Caco-2 (cell line): ENCODE measurements at regions of chr3 and their contacts with region 1.

Region 1: DNA sequence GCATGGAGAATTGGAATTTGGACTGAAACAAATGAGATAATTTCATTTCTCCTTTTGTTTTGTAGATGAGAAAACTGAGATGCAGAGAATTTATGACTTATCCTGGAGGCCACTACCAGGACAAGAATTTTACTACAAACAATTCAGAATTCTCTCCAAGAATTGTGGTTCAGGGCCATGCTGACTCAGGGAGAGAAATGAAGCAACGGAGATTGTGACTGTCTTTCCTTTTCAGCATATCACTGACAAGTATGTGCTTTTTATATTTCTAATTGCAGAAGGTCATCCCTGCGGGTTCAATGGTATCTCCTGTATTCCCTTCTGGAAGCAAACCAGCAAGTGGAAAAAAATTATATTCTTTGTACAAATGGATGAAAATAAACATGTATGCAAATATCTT is 170.8 kb upstream of the MITF start:
- DNase-seq: no peak
- H3K4me3 ChIP-seq: no peak overlapping the region
- H3K4me3 Mint-ChIP-seq: no peak overlapping the region
- H3K27ac Mint-ChIP-seq: no peak overlapping the region
- H3K4me1 ChIP-seq: no peaks in the 10 kb centered on the region
- H3K4me1 Mint-ChIP-seq: no peaks in the 10 kb centered on the region
- H3K27me3 ChIP-seq: no peaks in the 10 kb centered on the region
- H3K27me3 Mint-ChIP-seq: peaks cover 16% of the 10 kb centered on the region
- CTCF ChIP-seq: no peak

Region 2: GRCh38 chr3:69420781-69421520 is 147.5 kb before region 1 on chr3:
- CTCF ChIA-PET with region 1: no interaction called
- POLR2A ChIA-PET with region 1: no interaction called
- intact Hi-C with region 1: no loop called
- DNase-seq: no peak
- H3K4me3 ChIP-seq: no peak overlapping the region
- H3K4me3 Mint-ChIP-seq: no peak overlapping the region
- H3K27ac Mint-ChIP-seq: no peak overlapping the region
- H3K4me1 ChIP-seq: peaks cover 4% of the 10 kb centered on the region
- H3K4me1 Mint-ChIP-seq: peaks cover 9% of the 10 kb centered on the region
- H3K27me3 ChIP-seq: no peaks in the 10 kb centered on the region
- H3K27me3 Mint-ChIP-seq: no peaks in the 10 kb centered on the region
- CTCF ChIP-seq: no peak

Region 3: DNA sequence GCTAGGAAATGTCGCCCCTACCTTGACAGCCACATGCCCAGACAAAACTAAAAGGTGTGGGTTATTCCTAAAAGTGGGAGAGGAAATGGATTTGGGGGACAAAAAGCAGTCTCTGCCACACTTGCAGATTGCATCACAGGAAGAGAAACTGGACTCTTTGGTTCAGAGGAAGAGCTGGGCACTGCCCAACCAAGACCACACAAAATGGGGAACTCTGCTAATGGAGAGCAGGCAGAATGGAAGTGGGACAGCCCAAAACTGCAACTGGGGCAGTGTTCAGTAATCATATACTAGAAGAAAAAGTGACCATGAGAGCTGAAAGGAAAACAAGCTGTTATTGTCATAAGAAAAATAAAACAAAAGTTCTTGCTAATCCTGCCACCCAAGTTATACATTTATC is 43.6 kb before region 1 on chr3:
- CTCF ChIA-PET with region 1: no interaction called
- POLR2A ChIA-PET with region 1: interaction called, 11 read pairs
- intact Hi-C with region 1: no loop called
- DNase-seq: no peak
- H3K4me3 ChIP-seq: no peak overlapping the region
- H3K4me3 Mint-ChIP-seq: no peak overlapping the region
- H3K27ac Mint-ChIP-seq: no peak overlapping the region
- H3K4me1 ChIP-seq: no peaks in the 10 kb centered on the region
- H3K4me1 Mint-ChIP-seq: no peaks in the 10 kb centered on the region
- H3K27me3 ChIP-seq: no peaks in the 10 kb centered on the region
- H3K27me3 Mint-ChIP-seq: peaks cover 7% of the 10 kb centered on the region
- CTCF ChIP-seq: no peak